ENCODE measurements at regions of chr5 and their contacts with region 1.

Region 1: DNA sequence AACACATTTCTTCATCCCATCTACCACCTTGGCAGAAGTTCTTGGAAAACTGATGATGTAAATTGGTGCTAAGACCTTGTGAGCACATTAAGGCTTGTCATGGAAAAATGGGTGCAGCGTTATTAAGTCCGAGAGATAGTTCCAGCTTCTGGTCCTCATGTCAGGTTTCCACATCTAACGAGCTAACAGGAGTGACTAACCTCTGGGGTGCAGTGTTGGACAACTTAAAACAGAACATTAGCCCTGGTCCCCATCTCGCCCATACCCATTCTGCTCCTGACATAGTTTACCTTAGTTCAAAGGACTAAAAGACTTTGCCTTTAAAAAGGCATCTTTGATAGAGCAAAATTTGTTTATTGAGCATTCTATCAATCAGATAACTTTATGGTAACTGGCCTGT is 128.0 kb downstream of the SLC1A3 start:
- DNase-seq: no peak
- ATAC-seq: peak; percentile 81
- H3K4me3 ChIP-seq: no peak overlapping the region
- H3K27ac ChIP-seq: no peak overlapping the region
- H3K4me1 ChIP-seq: peaks cover 0 to 2% of the 10 kb centered on the region in 2 experiments; a peak in 2 of 4 replicates
- H3K27me3 ChIP-seq: no peaks in the 10 kb centered on the region
- CTCF ChIP-seq: peak in 2 of 3 experiments; percentile 11 to 39; a peak in 1 of 6 replicates
- POLR2A ChIP-seq: no peak
- RAD21 ChIP-seq: peak; percentile 57

Region 2: GRCh38 chr5:36619012-36619635 is 115.3 kb before region 1 on chr5:
- CTCF ChIA-PET with region 1: no interaction called
- POLR2A ChIA-PET with region 1: no interaction called
- RAD21 ChIA-PET with region 1: no interaction called
- intact Hi-C with region 1: no loop called
- DNase-seq: no peak
- ATAC-seq: no peak
- H3K4me3 ChIP-seq: no peak overlapping the region
- H3K27ac ChIP-seq: no peak overlapping the region
- H3K4me1 ChIP-seq: peaks cover 0 to 9% of the 10 kb centered on the region in 2 experiments; a peak in 2 of 4 replicates
- H3K27me3 ChIP-seq: no peaks in the 10 kb centered on the region
- CTCF ChIP-seq: no peak
- POLR2A ChIP-seq: no peak
- RAD21 ChIP-seq: no peak

Region 3: DNA sequence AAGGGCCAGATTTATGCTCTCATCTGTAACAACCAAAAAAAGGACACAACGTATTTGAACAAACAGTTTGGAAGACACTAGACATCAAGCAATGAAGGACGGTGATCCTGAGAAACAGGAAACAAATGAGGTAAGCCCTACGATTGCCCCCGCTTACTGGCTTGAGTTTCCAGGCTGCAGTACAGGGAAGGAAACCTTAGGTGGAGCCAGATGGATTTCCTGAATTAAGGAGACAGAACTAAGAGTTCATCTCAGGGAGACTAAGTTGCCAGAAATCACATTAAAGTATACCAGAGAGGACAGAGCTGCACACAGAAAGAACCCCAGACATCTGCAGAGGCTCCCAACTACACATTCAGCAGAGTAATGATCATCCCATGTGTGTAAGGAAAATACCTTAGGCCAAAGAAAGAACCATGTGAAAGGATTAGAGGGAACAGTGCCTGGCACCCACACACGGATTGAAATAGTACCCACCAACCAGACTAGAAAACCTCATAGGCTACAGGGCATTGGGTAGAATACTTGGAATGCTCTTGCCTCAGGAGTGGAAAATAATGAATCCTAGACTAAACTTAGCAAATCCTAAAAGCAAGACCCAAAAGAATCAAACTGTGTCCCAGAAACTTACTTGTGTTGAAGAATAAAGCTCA is 42.8 kb after region 1 on chr5:
- CTCF ChIA-PET with region 1: no interaction called
- POLR2A ChIA-PET with region 1: no interaction called
- RAD21 ChIA-PET with region 1: no interaction called
- intact Hi-C with region 1: no loop called
- DNase-seq: peak; percentile 15
- ATAC-seq: peak; percentile 89
- H3K4me3 ChIP-seq: no peak overlapping the region
- H3K27ac ChIP-seq: no peak overlapping the region
- H3K4me1 ChIP-seq: no peaks in the 10 kb centered on the region
- H3K27me3 ChIP-seq: no peaks in the 10 kb centered on the region
- CTCF ChIP-seq: peak; percentile 29 to 43 (median 39); a peak in 4 of 6 replicates
- POLR2A ChIP-seq: no peak
- RAD21 ChIP-seq: peak; percentile 37

Region 4: DNA sequence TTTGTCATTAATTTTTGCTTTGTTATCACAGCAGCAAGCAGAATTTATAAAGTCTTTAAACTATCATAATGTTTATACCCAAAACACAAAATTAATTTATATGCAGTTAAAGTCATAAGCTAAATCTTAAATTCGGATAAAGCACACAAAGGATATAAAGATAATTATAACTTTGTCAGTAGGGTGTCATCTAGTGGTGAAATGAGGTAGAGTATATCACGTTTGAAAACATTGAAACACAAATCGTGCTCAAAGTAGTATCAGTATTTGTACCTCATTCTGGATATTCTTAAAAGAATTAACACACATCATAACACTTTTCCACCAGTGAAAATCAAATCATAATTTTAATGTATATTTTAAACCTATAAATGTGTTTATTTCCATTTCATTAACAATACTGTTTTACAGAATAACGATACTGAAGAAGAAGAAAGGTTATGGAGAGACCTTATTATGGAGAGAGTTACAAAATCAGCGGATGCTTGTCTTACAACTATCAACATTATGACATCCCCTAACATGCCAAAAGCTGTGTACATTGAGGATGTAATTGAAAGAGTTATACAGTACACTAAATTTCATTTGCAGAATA is 271.6 kb after region 1 on chr5:
- CTCF ChIA-PET with region 1: interaction called, 9 read pairs
- POLR2A ChIA-PET with region 1: no interaction called
- RAD21 ChIA-PET with region 1: no interaction called
- intact Hi-C with region 1: loop called (anchors 5 kb)
- DNase-seq: peak; percentile 7
- ATAC-seq: peak; percentile 52; the same call in 1 of the 2 replicates
- H3K4me3 ChIP-seq: no peak overlapping the region
- H3K27ac ChIP-seq: no peak overlapping the region
- H3K4me1 ChIP-seq: no peaks in the 10 kb centered on the region
- H3K27me3 ChIP-seq: no peaks in the 10 kb centered on the region
- CTCF ChIP-seq: peak; percentile 44 to 71 (median 49); a peak in 5 of 6 replicates
- POLR2A ChIP-seq: no peak
- RAD21 ChIP-seq: peak; percentile 49

Region 5: DNA sequence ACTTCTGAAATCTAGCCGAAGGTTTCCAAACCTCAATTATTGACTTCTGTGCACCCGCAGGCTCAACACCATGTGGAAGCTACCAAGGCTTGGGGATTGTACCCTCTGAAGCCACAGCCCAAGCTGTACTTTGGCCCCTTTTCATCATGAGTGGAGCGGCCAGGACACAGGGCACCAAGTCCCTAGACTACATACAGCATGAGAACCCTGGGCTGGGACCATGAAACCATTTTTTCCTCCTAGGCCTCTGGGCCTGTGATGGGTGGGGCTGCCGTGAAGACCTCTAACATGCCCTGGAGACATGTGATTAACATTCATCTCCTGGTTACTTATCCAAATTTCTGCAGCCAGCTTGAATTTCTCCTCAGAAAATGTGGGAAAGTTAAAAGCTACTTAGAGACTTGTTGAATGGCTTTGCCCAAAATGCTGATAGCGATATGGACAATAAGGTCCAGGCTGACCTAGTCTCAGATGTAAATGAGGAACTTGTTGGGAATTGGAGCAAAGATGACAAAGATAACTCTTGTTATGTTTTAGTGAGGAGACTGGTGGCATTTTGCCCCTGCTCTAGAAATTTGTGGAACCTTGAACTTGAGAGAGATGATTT is 548.9 kb after region 1 on chr5:
- CTCF ChIA-PET with region 1: no interaction called
- POLR2A ChIA-PET with region 1: no interaction called
- RAD21 ChIA-PET with region 1: no interaction called
- intact Hi-C with region 1: no loop called
- DNase-seq: no peak
- ATAC-seq: no peak
- H3K4me3 ChIP-seq: no peak overlapping the region
- H3K27ac ChIP-seq: no peak overlapping the region
- H3K4me1 ChIP-seq: no peaks in the 10 kb centered on the region
- H3K27me3 ChIP-seq: no peaks in the 10 kb centered on the region
- CTCF ChIP-seq: no peak
- POLR2A ChIP-seq: no peak
- RAD21 ChIP-seq: no peak

Measured in HCT116 (cell line).